Right cardiac atrium (tissue), 5 donors: ENCODE measurements at regions of chr6 and their contacts with region 1.

Region 1: DNA sequence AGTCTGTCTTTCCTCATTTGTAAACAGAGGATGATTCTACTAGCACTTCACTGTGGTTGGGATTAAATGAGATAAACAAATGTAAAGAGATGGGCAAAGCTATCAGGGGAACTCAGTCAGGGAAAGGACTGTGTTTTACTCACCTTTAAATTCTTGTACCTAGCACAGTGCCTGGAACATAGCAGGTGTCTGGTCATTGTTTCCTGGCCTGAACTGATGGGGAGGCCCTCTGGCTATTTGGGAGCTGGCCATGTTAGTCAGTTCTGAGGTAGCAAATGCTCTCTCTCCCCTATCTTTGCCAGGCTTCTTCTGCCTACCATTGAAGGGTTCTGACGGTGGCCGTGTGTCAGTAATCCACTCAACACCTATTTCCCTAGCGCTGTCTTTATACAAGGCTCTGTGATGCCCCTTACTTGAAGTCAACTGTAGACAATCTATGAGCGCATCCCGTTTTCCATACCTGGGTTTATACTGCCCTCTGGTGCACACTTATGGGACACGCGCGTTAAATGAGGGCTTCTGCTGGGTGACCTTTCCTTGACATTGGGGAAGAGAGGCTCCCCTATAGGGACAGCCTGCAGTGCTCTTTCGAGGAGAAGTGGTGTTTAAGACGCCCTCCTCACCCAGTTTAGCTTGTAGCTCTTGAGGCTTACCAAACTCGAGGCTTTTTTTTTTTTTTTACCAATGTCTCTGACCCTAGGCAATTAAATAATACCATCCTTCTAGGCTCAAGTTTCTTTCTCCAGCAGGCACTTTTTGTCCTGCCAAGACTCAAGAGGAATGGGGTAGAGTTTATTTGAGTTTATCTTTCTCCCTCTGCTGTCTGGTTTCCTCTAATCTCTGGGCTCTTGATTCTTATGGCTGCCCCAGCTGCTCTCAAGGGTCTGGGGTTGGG is 4.0 kb upstream of the SPATS1 start:
- DNase-seq: peak; percentile 19 to 80 (median 73)
- ATAC-seq: peak; percentile 71 to 73
- H3K4me3 ChIP-seq: no peak overlapping the region
- H3K27ac ChIP-seq: no peak overlapping the region
- H3K4me1 ChIP-seq: no peaks in the 10 kb centered on the region
- H3K27me3 ChIP-seq: no peaks in the 10 kb centered on the region

Region 2: DNA sequence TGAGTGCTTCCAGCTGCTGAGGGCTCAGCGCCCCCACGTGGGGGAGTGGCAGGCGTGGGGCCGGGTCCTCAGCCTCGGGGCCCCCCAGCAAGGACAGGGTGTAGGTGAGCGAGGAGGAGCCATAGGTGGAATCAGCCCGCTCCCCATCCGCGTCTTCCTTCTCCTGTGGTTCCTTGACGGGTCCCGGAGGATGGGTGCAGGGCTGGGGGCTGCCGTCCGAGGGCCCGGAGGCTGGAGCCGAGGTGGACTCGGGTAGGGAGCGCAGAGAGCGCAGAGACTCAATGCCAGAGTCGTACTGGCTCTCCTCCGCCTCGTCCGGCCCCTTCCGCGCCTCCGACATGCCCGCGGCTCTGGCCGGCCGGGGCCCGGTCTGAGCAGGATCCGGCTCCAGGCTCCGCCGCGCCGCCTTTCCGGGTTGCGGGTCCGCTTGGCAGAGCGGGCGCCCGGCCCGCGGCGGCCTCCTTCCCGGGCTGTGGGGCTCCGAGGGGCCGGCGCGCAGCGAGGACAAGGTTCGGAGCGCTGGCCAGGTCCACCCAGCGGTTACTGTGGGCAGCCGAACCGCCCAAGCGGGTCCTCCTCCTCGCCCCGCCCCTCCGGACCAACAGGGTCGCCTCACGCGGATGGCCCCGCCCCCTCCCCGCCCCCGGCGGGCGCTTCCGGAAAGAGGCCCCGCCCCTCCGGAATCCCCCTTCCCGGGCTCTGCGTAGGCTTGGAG is 73.3 kb before region 1 on chr6 and contains the start of gene NFKBIE:
- intact Hi-C with region 1: loop called in 3 of 4 experiments (anchors 1 to 10 kb)
- DNase-seq: peak; percentile 97 to 99 (median 99)
- ATAC-seq: peak; percentile 93 to 95
- H3K4me3 ChIP-seq: peak within 1 kb of the TSS; percentile 52
- H3K27ac ChIP-seq: peak within 1 kb of the TSS; percentile 10
- H3K4me1 ChIP-seq: peaks cover 14% of the 10 kb centered on the region
- H3K27me3 ChIP-seq: no peaks in the 10 kb centered on the region
- total RNA-seq, gene NFKBIE: 3.7 to 5.5 (median 4.3) TPM

Region 3: DNA sequence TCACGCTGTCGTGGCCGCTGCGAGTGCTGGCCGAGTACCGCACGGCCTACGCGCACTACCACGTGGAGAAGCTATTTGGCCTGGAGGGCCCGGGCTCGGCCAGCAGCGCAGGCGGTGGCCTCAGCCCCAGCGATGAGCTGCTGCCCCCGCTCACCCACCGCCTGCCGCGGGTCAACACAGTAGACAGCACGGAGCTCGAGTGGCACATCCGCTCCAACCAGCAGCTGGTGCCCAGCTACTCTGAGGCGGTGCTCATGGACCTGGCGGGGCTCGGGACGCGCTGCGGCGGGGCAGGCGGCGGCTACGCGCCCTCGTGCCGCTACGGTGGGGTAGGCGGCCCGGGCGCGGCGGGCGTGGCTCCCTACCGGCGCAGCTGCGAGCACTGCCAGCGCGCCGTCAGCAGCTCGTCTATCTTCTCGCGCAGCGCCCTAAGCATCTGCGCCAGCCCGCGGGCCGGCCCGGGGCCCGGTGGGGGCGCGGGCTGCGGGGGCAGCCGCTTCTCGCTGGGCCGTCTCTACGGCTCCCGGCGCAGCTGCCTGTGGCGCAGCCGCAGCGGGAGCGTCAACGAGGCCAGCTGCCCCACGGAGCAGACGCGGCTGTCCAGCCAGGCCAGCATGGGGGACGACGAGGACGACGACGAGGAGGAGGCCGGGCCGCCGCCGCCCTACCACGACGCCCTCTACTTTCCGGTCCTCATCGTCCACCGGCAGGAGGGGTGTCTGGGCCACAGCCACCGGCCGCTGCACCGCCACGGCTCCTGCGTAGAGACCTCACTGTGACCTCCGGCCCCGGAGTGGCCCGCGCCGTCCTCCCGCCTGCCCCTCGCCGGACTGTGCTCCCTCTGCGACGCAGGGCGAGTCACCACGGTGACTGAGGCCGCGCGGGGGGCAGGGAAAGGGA is 62.5 kb before region 1 on chr6:
- intact Hi-C with region 1: loop called in 1 of 4 experiments (anchors 10 kb)
- DNase-seq: no peak
- ATAC-seq: peak; percentile 20 to 24
- H3K4me3 ChIP-seq: peak overlapping the region; percentile 14
- H3K27ac ChIP-seq: no peak overlapping the region
- H3K4me1 ChIP-seq: no peaks in the 10 kb centered on the region
- H3K27me3 ChIP-seq: no peaks in the 10 kb centered on the region